GM10248 (cell line): ENCODE measurements at regions of chr6 and their contacts with region 1.

Region 1: DNA sequence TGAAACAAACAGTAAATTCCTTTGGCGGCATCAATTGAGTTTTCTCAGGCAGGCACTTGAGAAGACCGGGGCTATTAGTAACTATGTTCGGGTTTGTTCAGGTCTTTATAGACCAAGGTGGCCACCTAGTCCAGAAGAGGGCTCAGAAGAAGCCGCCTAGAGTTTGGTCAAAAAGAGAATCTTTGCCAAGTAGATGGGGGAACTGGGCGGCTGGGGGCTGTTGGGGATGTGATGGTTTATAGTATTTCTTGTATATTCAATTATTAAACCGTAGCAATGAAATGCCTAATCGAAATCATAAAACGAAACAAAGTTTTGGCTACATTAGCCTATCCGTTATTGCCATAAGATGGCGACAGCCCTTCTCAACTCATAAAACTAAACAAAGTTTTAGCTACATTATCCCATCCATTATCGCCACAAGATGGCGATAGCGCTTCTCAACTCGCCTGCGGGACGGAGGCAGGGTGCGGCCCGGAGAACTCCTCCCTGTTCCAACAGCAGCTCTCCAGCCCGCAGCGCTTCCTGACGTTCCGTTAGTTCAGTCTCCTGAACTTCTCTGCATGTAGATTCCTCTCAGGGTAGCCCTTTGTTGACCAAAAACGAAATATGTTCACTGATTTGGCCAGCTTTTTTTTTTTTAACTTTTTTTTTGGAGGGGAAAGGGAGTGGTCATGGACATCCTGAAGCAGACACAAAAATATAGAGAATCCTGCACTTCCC is 120.5 kb upstream of the PRSS16 start:
- DNase-seq: peak; percentile 77
- CTCF ChIP-seq: peak; percentile 90

Region 2: GRCh38 chr6:27138837-27139755 is 12.1 kb after region 1 on chr6:
- CTCF ChIA-PET with region 1: interaction called, 12 read pairs
- POLR2A ChIA-PET with region 1: interaction called, 211 read pairs
- DNase-seq: peak; percentile 65
- CTCF ChIP-seq: peak; percentile 8

Region 3: DNA sequence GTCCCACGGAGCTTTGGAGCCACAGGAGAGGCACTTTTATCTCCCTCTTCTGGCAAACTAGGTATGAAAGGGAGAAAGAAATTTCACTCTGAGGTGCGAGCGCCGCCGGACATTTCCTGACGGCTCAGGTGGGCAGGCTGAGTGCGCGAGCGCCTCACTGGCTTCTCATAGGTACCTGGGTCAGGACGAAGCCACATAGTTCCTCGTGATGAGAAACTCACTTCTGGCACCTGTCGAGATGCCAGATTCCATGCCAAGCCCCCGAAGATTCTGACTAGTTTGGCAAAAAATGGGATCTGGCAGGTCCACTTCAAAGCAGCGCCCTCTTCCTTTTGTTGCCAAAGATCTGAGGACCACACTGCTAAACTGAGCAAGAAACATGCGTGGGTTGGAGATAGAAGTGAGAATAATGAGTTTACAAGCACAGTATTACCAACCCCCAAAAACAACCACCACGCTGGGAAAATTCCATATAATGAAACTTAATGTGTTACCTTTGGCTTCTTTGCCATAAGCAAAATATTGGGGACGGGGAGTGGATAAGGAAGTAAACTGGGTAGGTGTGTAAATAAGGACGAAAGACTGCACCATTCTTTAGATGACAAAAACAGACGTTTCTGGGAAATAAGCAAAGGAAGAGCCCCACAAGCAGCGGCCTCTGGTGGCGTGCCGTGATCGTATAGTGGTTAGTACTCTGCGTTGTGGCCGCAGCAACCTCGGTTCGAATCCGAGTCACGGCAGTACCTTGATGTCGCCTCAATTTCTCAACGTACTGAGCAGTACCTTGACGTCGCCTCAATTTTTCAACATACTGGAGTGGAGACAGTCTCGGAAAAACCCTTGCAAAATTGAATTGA is 30.7 kb after region 1 on chr6:
- CTCF ChIA-PET with region 1: interaction called, 29 read pairs
- POLR2A ChIA-PET with region 1: no interaction called
- DNase-seq: peak; percentile 58
- CTCF ChIP-seq: peak; percentile 55